Naive thymus-derived CD4-positive, alpha-beta T cell (primary cell): ENCODE measurements at regions of chr5 and their contacts with region 1.

Region 1: DNA sequence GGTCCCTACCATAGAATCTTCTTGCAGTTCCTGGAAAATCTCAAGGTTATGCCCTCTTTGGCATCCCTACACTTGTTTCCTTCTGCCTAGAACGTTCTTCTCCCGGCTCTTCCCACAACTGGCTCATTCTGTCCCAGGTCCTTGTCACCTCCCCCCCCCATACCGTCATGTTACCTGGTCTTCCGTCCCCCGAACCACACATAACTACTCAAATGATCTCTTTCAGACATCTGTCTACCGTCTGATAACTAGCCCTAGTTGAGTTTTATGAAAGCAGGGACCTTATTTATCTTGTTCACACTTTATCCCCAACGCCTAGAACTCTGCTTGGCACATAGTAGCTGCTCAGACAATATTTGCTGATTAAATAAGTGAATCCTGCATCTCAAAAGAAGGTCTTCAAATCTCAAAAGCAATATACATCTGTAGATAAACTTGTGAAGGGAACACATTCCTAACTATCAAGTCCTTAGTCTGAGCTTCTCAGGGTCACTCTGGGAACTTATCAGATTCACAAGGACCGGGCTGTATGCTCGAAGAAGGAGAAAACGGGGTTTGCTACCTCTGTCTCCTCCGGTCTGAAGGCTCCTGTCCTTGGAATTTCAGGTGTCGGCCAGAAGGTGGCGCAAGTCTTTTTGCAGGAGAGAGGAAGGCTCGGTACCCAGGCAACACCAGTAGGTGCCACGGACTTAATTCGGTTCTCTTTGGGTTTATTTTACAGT is 30.0 kb downstream of the LCP2 start:
- DNase-seq: peak; percentile 62 to 82 (median 77)
- ATAC-seq: peak; percentile 75
- H3K4me3 ChIP-seq: no peak overlapping the region
- H3K4me3 Mint-ChIP-seq: peak overlapping the region; percentile 63 to 81 (median 73)
- H3K27ac ChIP-seq: peak overlapping the region; percentile 66
- H3K27ac Mint-ChIP-seq: peak overlapping the region; percentile 81 to 98 (median 93)
- H3K4me1 ChIP-seq: peaks cover 69 to 75% of the 10 kb centered on the region in 2 donors
- H3K4me1 Mint-ChIP-seq: peaks cover 62 to 100% (median 94%) of the 10 kb centered on the region in 7 donors
- H3K27me3 ChIP-seq: no peaks in the 10 kb centered on the region
- H3K27me3 Mint-ChIP-seq: no peaks in the 10 kb centered on the region

Region 2: GRCh38 chr5:170190436-170191134 is 77.0 kb before region 1 on chr5:
- CTCF ChIA-PET with region 1: no interaction called
- POLR2A ChIA-PET with region 1: no interaction called
- intact Hi-C with region 1: no loop called
- DNase-seq: no peak
- ATAC-seq: no peak
- H3K4me3 ChIP-seq: no peak overlapping the region
- H3K4me3 Mint-ChIP-seq: no peak overlapping the region
- H3K27ac ChIP-seq: no peak overlapping the region
- H3K27ac Mint-ChIP-seq: no peak overlapping the region
- H3K4me1 ChIP-seq: no peaks in the 10 kb centered on the region
- H3K4me1 Mint-ChIP-seq: peaks cover 0 to 2% (median 0%) of the 10 kb centered on the region in 7 donors
- H3K27me3 ChIP-seq: no peaks in the 10 kb centered on the region
- H3K27me3 Mint-ChIP-seq: peaks cover 0 to 19% (median 0%) of the 10 kb centered on the region in 5 donors

Region 3: GRCh38 chr5:170225326-170226128 is 42.1 kb before region 1 on chr5:
- CTCF ChIA-PET with region 1: interaction called, 40 read pairs
- POLR2A ChIA-PET with region 1: interaction called, 10 read pairs
- intact Hi-C with region 1: loop called in 1 of 2 experiments (anchors 1 kb)
- DNase-seq: peak; percentile 45 to 78 (median 69)
- ATAC-seq: peak; percentile 75
- H3K4me3 ChIP-seq: no peak overlapping the region
- H3K4me3 Mint-ChIP-seq: peak overlapping the region in 1 of 10 donors; percentile 15
- H3K27ac ChIP-seq: no peak overlapping the region
- H3K27ac Mint-ChIP-seq: peak overlapping the region in 3 of 9 donors; percentile 31 to 75 (median 61)
- H3K4me1 ChIP-seq: no peaks in the 10 kb centered on the region
- H3K4me1 Mint-ChIP-seq: peaks cover 0 to 11% (median 5%) of the 10 kb centered on the region in 7 donors
- H3K27me3 ChIP-seq: no peaks in the 10 kb centered on the region
- H3K27me3 Mint-ChIP-seq: no peaks in the 10 kb centered on the region

Region 4: DNA sequence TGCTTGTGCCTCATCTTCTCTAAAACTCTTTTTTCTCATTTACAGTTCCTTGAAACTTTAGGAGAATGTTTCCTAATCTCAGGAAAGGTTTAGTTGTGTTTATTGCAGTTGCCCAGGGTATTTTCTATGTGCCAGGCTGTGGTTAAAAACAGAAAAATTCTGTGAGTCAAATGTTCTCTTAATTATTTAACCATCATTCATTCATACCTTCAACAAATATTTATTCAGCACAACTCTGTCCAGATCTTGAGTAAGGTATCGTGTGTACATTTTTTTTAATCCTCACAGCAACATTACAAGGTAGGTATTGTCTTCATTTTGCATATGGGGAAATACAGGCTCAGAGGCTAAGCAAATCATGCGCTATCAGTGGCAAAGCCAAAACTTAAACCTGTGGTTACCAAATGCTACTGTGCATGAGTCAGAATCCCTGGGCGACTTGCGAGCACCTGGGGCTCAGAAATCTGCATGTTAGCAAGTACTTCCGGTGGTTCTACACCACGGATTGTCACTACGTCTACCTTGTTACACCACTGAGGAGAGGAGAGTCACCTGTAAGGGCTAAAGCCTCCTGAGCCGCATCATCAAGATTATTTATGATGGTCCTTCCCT is 13.6 kb before region 1 on chr5:
- CTCF ChIA-PET with region 1: interaction called, 6 read pairs
- POLR2A ChIA-PET with region 1: interaction called, 11 read pairs
- intact Hi-C with region 1: loop called (anchors 1 kb)
- DNase-seq: peak in 8 of 9 donors; percentile 41 to 76 (median 56)
- ATAC-seq: peak; percentile 95
- H3K4me3 ChIP-seq: no peak overlapping the region
- H3K4me3 Mint-ChIP-seq: peak overlapping the region in 8 of 10 donors; percentile 5 to 61 (median 40)
- H3K27ac ChIP-seq: peak overlapping the region; percentile 53
- H3K27ac Mint-ChIP-seq: peak overlapping the region; percentile 28 to 97 (median 75)
- H3K4me1 ChIP-seq: peaks cover 19 to 21% of the 10 kb centered on the region in 2 donors
- H3K4me1 Mint-ChIP-seq: peaks cover 20 to 67% (median 63%) of the 10 kb centered on the region in 7 donors
- H3K27me3 ChIP-seq: no peaks in the 10 kb centered on the region
- H3K27me3 Mint-ChIP-seq: no peaks in the 10 kb centered on the region

Region 5: GRCh38 chr5:170293273-170293672 is 25.7 kb after region 1 on chr5:
- CTCF ChIA-PET with region 1: interaction called, 430 read pairs
- POLR2A ChIA-PET with region 1: interaction called, 1,119 read pairs
- intact Hi-C with region 1: loop called in 1 of 2 experiments (anchors 1 kb)
- DNase-seq: peak in 2 of 9 donors; percentile 18 to 60
- ATAC-seq: peak; percentile 75
- H3K4me3 ChIP-seq: peak overlapping the region; percentile 92
- H3K4me3 Mint-ChIP-seq: peak overlapping the region; percentile 92 to 100 (median 98)
- H3K27ac ChIP-seq: peak overlapping the region; percentile 88
- H3K27ac Mint-ChIP-seq: peak overlapping the region; percentile 67 to 98 (median 95)
- H3K4me1 ChIP-seq: peaks cover 58 to 66% of the 10 kb centered on the region in 2 donors
- H3K4me1 Mint-ChIP-seq: peaks cover 62 to 75% (median 71%) of the 10 kb centered on the region in 7 donors
- H3K27me3 ChIP-seq: no peaks in the 10 kb centered on the region
- H3K27me3 Mint-ChIP-seq: no peaks in the 10 kb centered on the region

Region 6: GRCh38 chr5:170302653-170303501 is 35.3 kb after region 1 on chr5:
- CTCF ChIA-PET with region 1: interaction called, 430 read pairs
- POLR2A ChIA-PET with region 1: interaction called, 1,119 read pairs
- intact Hi-C with region 1: loop called in 1 of 2 experiments (anchors 1 kb)
- DNase-seq: peak; percentile 44 to 92 (median 84)
- ATAC-seq: peak; percentile 86
- H3K4me3 ChIP-seq: peak overlapping the region; percentile 54
- H3K4me3 Mint-ChIP-seq: peak overlapping the region; percentile 85 to 99 (median 92)
- H3K27ac ChIP-seq: peak overlapping the region; percentile 79
- H3K27ac Mint-ChIP-seq: peak overlapping the region; percentile 74 to 99 (median 96)
- H3K4me1 ChIP-seq: peaks cover 56 to 61% of the 10 kb centered on the region in 2 donors
- H3K4me1 Mint-ChIP-seq: peaks cover 56 to 98% (median 87%) of the 10 kb centered on the region in 7 donors
- H3K27me3 ChIP-seq: no peaks in the 10 kb centered on the region
- H3K27me3 Mint-ChIP-seq: no peaks in the 10 kb centered on the region

Region 7: GRCh38 chr5:170333161-170333910 is 65.7 kb after region 1 on chr5:
- CTCF ChIA-PET with region 1: interaction called, 278 read pairs
- POLR2A ChIA-PET with region 1: interaction called, 132 read pairs
- intact Hi-C with region 1: loop called in 1 of 2 experiments (anchors 1 kb)
- DNase-seq: peak in 6 of 9 donors; percentile 36 to 61 (median 50)
- ATAC-seq: peak; percentile 36
- H3K4me3 ChIP-seq: peak overlapping the region; percentile 40
- H3K4me3 Mint-ChIP-seq: peak overlapping the region in 4 of 10 donors; percentile 77 to 82 (median 81)
- H3K27ac ChIP-seq: peak overlapping the region; percentile 87
- H3K27ac Mint-ChIP-seq: no peak overlapping the region
- H3K4me1 ChIP-seq: peaks cover 79 to 87% of the 10 kb centered on the region in 2 donors
- H3K4me1 Mint-ChIP-seq: peaks cover 0 to 65% (median 30%) of the 10 kb centered on the region in 7 donors
- H3K27me3 ChIP-seq: no peaks in the 10 kb centered on the region
- H3K27me3 Mint-ChIP-seq: peaks cover 0 to 3% (median 0%) of the 10 kb centered on the region in 5 donors

Region 8: DNA sequence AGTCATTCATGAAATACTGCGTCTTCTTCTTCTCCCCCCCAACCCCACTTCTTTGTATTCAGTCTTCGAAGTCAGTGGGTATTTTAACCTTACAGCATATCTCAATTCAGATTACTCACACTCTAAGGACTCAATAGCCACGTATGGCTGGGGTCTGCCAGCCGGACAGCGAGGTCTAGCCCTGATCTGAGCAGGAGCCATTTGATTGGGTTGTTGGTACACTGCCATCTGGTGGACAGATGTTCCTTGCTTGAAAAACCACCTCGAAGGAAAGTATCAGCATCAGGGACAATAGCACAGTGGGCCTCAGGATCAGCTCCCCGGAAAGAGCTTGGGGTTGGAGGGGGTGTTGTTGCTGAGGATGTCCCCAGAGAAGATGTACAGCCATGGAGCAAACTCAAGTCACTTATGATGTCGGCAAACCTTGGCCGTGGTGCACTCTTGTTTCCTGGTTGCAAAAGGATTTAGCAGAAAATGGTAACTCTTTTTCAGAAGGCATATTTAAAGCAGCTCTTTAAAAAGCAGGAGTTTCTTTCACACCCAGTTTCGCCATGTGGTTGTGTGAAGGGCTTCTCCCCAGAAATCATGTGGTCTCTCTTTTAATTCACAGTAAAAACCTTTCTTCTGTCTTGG is 153.3 kb after region 1 on chr5:
- CTCF ChIA-PET with region 1: interaction called, 6 read pairs
- POLR2A ChIA-PET with region 1: interaction called, 3 read pairs
- intact Hi-C with region 1: loop called in 1 of 2 experiments (anchors 2 kb)
- DNase-seq: peak; percentile 18 to 66 (median 48)
- ATAC-seq: peak; percentile 80
- H3K4me3 ChIP-seq: no peak overlapping the region
- H3K4me3 Mint-ChIP-seq: no peak overlapping the region
- H3K27ac ChIP-seq: no peak overlapping the region
- H3K27ac Mint-ChIP-seq: peak overlapping the region in 1 of 9 donors; percentile 1
- H3K4me1 ChIP-seq: peaks cover 10 to 19% of the 10 kb centered on the region in 2 donors
- H3K4me1 Mint-ChIP-seq: peaks cover 3 to 34% (median 30%) of the 10 kb centered on the region in 7 donors
- H3K27me3 ChIP-seq: no peaks in the 10 kb centered on the region
- H3K27me3 Mint-ChIP-seq: peaks cover 0 to 35% (median 0%) of the 10 kb centered on the region in 5 donors

Region 9: GRCh38 chr5:171272996-171273970 is 1005.7 kb after region 1 on chr5:
- CTCF ChIA-PET with region 1: no interaction called
- POLR2A ChIA-PET with region 1: no interaction called
- intact Hi-C with region 1: no loop called
- DNase-seq: no peak
- ATAC-seq: no peak
- H3K4me3 ChIP-seq: no peak overlapping the region
- H3K4me3 Mint-ChIP-seq: no peak overlapping the region
- H3K27ac ChIP-seq: no peak overlapping the region
- H3K27ac Mint-ChIP-seq: no peak overlapping the region
- H3K4me1 ChIP-seq: no peaks in the 10 kb centered on the region
- H3K4me1 Mint-ChIP-seq: no peaks in the 10 kb centered on the region
- H3K27me3 ChIP-seq: no peaks in the 10 kb centered on the region
- H3K27me3 Mint-ChIP-seq: peaks cover 0 to 26% (median 9%) of the 10 kb centered on the region in 5 donors